Calu3 (cell line): ENCODE measurements at regions of chr6 and their contacts with region 1.

Region 1: DNA sequence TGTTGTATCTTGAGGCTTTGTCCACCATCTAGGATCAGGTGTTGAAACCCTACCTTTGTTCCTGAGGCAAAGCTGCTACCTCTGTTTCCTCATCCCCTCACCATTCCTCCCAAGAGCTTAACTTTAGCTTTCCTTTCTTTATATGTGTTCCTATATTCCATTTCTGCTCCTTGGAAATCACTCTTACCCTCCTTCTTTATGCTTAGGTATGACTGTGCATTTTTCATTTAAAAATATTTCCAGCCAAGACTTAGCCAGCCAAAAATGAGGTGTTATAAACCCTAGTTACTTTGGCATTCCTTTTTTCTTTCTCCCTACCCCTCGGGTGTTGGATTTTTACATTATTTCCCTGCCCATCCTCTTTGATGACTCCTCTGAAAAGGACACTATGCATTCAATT is 57.7 kb downstream of the TSBP1 start:
- DNase-seq: no peak
- H3K4me3 Mint-ChIP-seq: no peak overlapping the region
- H3K27ac Mint-ChIP-seq: no peak overlapping the region
- H3K4me1 Mint-ChIP-seq: no peaks in the 10 kb centered on the region
- H3K27me3 Mint-ChIP-seq: peaks cover 83% of the 10 kb centered on the region
- CTCF ChIP-seq: no peak

Region 2: GRCh38 chr6:32047850-32048766 is 265.9 kb before region 1 on chr6:
- CTCF ChIA-PET with region 1: interaction called, 11 read pairs
- intact Hi-C with region 1: no loop called
- DNase-seq: peak; percentile 93
- H3K4me3 Mint-ChIP-seq: no peak overlapping the region
- H3K27ac Mint-ChIP-seq: no peak overlapping the region
- H3K4me1 Mint-ChIP-seq: peaks cover 16% of the 10 kb centered on the region
- H3K27me3 Mint-ChIP-seq: peaks cover 33% of the 10 kb centered on the region
- CTCF ChIP-seq: peak; percentile 95